ENCODE measurements at regions of chrX and their contacts with region 1.

Region 1: GRCh38 chrX:133053861-133054598 is 42.9 kb downstream of the USP26 start:
- DNase-seq: no peak
- H3K4me3 ChIP-seq: no peak overlapping the region
- H3K27ac ChIP-seq: no peak overlapping the region
- H3K4me1 ChIP-seq: no peaks in the 10 kb centered on the region
- H3K27me3 ChIP-seq: no peaks in the 10 kb centered on the region
- CTCF ChIP-seq: no peak
- EP300 ChIP-seq: no peak
- POLR2A ChIP-seq: no peak

Region 2: GRCh38 chrX:132957211-132958090 is 96.6 kb before region 1 on chrX:
- in situ Hi-C with region 1: no loop called
- intact Hi-C with region 1: no loop called
- DNase-seq: peak; percentile 9
- H3K4me3 ChIP-seq: peak overlapping the region; percentile 11 to 54 (median 28)
- H3K27ac ChIP-seq: no peak overlapping the region
- H3K4me1 ChIP-seq: peaks cover 0 to 24% (median 8%) of the 10 kb centered on the region in 4 donors
- H3K27me3 ChIP-seq: peaks cover 38% of the 10 kb centered on the region
- CTCF ChIP-seq: no peak
- EP300 ChIP-seq: no peak
- POLR2A ChIP-seq: no peak

Region 3: DNA sequence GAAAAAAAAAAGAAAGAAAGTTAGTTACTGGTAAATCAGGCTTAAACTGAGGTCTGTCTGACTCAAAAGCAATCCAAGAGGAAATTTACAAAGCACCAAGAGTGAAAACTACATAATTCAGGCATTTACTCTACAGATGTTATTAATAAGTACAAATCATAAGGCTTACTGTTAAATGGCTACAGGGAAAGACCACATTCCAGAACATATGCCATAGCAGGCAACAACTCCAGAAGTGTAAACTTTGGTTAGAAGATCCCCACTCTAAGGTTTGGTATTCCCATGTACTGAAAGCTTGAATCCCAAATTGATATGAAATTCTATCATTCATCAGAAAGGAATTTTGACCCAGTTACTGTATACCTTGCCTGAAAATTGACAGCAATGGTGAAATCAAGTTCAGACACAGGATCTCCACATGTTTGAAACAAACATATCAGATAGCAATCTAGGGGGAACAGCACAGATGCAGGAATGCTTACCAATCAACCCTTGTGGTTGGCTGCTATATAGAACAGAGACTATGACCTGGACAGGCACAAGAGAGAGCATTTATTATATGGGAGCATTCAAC is 36.3 kb after region 1 on chrX:
- in situ Hi-C with region 1: no loop called
- intact Hi-C with region 1: no loop called
- DNase-seq: no peak
- H3K4me3 ChIP-seq: no peak overlapping the region
- H3K27ac ChIP-seq: no peak overlapping the region
- H3K4me1 ChIP-seq: no peaks in the 10 kb centered on the region
- H3K27me3 ChIP-seq: no peaks in the 10 kb centered on the region
- CTCF ChIP-seq: no peak
- EP300 ChIP-seq: no peak
- POLR2A ChIP-seq: no peak

Region 4: DNA sequence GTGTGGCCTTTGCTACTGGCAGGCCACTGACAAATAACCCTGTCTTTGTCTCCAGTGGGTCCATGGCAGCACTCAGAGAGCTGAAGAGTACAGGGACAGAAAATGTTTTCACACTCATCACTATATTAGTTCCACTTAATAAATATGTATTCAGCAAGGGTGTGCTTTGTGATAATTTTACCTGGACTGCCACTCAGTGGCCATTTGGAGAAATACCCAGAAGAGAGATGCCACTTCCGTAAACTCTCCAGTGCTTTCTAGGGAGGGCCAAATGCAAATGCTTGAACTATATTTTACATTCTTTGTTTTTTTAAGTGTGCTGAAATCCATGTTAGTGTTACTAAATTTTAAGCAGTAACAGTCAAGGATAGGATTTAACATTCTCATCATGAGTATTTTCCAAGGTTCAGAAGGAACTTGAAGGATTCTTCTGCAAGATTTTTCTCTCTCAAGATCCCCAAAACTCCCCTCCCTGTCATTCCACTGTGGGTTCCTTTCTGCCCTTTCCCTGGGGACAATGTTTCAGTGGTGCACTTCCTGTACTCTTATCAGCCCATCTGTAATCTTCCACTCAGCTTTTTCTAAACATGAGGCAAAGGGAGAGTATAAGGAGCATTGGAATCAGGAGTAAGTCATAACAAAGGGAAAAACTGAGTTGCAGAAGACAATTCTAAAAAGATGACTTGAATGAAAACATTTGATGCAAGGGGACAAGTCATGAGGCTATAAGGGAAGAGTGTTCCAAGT is 118.1 kb after region 1 on chrX:
- in situ Hi-C with region 1: loop called in 1 of 4 experiments (anchors 10 kb)
- intact Hi-C with region 1: no loop called
- DNase-seq: no peak
- H3K4me3 ChIP-seq: no peak overlapping the region
- H3K27ac ChIP-seq: no peak overlapping the region
- H3K4me1 ChIP-seq: peaks cover 0 to 4% (median 0%) of the 10 kb centered on the region in 4 donors
- H3K27me3 ChIP-seq: no peaks in the 10 kb centered on the region
- CTCF ChIP-seq: peak; percentile 32 to 51 (median 39)
- EP300 ChIP-seq: no peak
- POLR2A ChIP-seq: no peak

Region 5: DNA sequence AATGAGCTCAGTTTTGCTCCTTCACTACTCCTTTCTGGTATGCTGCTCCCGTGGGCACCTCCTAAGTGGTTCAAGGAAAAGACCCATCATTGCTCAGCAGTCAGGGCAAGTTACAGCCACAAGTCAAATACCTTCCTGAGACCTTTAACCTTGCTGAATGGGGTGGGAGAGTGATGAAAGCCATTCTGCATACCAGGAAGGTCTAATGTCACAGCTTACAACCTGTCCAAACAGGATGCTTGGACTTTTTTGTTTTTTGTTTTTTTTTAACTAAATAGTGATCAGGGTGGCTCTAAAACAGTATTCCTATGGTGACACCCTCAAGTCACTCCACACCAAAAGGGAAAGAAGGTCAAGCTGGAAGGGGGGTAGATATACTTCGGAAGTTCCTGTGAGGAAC is 838.3 kb after region 1 on chrX:
- in situ Hi-C with region 1: no loop called
- intact Hi-C with region 1: loop called (anchors 5 kb)
- DNase-seq: no peak
- H3K4me3 ChIP-seq: no peak overlapping the region
- H3K27ac ChIP-seq: no peak overlapping the region
- H3K4me1 ChIP-seq: no peaks in the 10 kb centered on the region
- H3K27me3 ChIP-seq: no peaks in the 10 kb centered on the region
- CTCF ChIP-seq: no peak
- EP300 ChIP-seq: no peak
- POLR2A ChIP-seq: no peak